CD8-positive, alpha-beta memory T cell (primary cell): ENCODE measurements at regions of chr18 and their contacts with region 1.

Region 1: GRCh38 chr18:3297025-3297984 is 35.4 kb downstream of the MYL12B start:
- DNase-seq: peak; percentile 83 to 95 (median 86)
- H3K4me3 ChIP-seq: peak overlapping the region; percentile 92
- H3K4me3 Mint-ChIP-seq: peak overlapping the region; percentile 92 to 98 (median 95)
- H3K27ac ChIP-seq: peak overlapping the region; percentile 80
- H3K27ac Mint-ChIP-seq: peak overlapping the region; percentile 31 to 93 (median 86)
- H3K4me1 ChIP-seq: peaks cover 12% of the 10 kb centered on the region
- H3K4me1 Mint-ChIP-seq: peaks cover 8 to 12% (median 11%) of the 10 kb centered on the region in 3 donors
- H3K27me3 ChIP-seq: peaks cover 5% of the 10 kb centered on the region
- H3K27me3 Mint-ChIP-seq: peaks cover 8 to 34% of the 10 kb centered on the region in 2 donors

Region 2: GRCh38 chr18:3254700-3255099 is 42.6 kb before region 1 on chr18:
- CTCF ChIA-PET with region 1: no interaction called
- POLR2A ChIA-PET with region 1: no interaction called
- DNase-seq: no peak
- H3K4me3 ChIP-seq: peak overlapping the region; percentile 17
- H3K4me3 Mint-ChIP-seq: peak overlapping the region in 2 of 7 donors; percentile 2 to 33
- H3K27ac ChIP-seq: no peak overlapping the region
- H3K27ac Mint-ChIP-seq: peak overlapping the region; percentile 49 to 100 (median 81)
- H3K4me1 ChIP-seq: peaks cover 93% of the 10 kb centered on the region
- H3K4me1 Mint-ChIP-seq: peaks cover 76 to 97% (median 95%) of the 10 kb centered on the region in 3 donors
- H3K27me3 ChIP-seq: no peaks in the 10 kb centered on the region
- H3K27me3 Mint-ChIP-seq: no peaks in the 10 kb centered on the region

Region 3: DNA sequence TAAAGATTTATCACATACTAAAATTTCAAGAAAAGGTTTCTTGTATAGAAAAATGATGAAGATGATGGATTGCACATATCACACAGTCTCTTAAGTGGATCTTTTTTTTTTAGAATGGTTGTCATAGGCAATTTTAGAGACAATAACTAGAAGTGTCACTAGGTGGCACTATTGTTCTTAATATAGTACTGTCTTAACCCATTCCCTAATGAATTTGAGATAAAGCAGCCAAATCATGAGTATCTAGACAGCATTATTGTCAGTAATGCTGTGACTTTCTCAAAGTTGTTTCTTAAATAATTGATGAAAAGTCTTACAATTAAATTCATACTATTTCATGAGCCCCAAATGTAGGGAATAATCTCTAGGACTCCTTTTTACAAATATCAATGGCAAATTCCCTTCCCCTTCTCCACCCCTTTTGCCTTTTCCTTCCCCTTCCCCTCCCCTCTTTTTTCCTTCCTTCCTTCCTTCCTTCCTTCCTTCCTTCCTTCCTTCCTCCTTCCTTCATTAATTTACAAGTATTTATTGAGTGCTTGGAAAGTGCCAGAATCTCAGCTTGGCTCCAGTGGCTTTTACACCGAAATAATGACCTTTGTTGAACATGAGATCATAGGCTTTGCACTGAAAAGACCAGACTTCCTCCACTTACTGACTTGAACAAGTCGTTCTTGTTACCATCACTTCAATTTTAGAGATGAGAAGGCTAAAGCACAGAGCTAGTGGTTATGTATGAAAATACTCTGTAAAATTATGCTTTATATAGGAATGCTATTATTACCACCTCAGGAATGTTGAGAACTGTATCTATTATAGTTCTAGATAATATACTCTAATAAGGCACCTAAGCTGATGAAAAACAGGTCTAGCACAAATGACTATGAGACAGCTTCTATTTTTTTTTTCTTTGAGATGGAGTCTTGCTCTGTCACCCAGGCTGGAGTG is 15.6 kb before region 1 on chr18:
- CTCF ChIA-PET with region 1: interaction called, 22 read pairs
- POLR2A ChIA-PET with region 1: no interaction called
- DNase-seq: peak in 2 of 5 donors; percentile 63 to 66
- H3K4me3 ChIP-seq: no peak overlapping the region
- H3K4me3 Mint-ChIP-seq: no peak overlapping the region
- H3K27ac ChIP-seq: no peak overlapping the region
- H3K27ac Mint-ChIP-seq: no peak overlapping the region
- H3K4me1 ChIP-seq: no peaks in the 10 kb centered on the region
- H3K4me1 Mint-ChIP-seq: peaks cover 0 to 5% (median 0%) of the 10 kb centered on the region in 3 donors
- H3K27me3 ChIP-seq: no peaks in the 10 kb centered on the region
- H3K27me3 Mint-ChIP-seq: no peaks in the 10 kb centered on the region

Region 4: GRCh38 chr18:3585656-3586509 is 288.6 kb after region 1 on chr18:
- CTCF ChIA-PET with region 1: interaction called, 10 read pairs
- POLR2A ChIA-PET with region 1: no interaction called
- DNase-seq: peak; percentile 40 to 78 (median 59)
- H3K4me3 ChIP-seq: no peak overlapping the region
- H3K4me3 Mint-ChIP-seq: peak overlapping the region in 3 of 7 donors; percentile 20 to 53 (median 21)
- H3K27ac ChIP-seq: peak overlapping the region; percentile 27
- H3K27ac Mint-ChIP-seq: peak overlapping the region in 6 of 8 donors; percentile 1 to 53 (median 43)
- H3K4me1 ChIP-seq: no peaks in the 10 kb centered on the region
- H3K4me1 Mint-ChIP-seq: peaks cover 9 to 14% (median 13%) of the 10 kb centered on the region in 3 donors
- H3K27me3 ChIP-seq: no peaks in the 10 kb centered on the region
- H3K27me3 Mint-ChIP-seq: peaks cover 0 to 1% of the 10 kb centered on the region in 2 donors

Region 5: GRCh38 chr18:3593904-3594661 is 296.8 kb after region 1 on chr18:
- CTCF ChIA-PET with region 1: interaction called, 12 read pairs
- POLR2A ChIA-PET with region 1: interaction called, 18 read pairs
- DNase-seq: peak; percentile 77 to 95 (median 93)
- H3K4me3 ChIP-seq: peak overlapping the region; percentile 74
- H3K4me3 Mint-ChIP-seq: peak overlapping the region; percentile 94 to 98 (median 95)
- H3K27ac ChIP-seq: peak overlapping the region; percentile 95
- H3K27ac Mint-ChIP-seq: peak overlapping the region; percentile 97 to 100 (median 99)
- H3K4me1 ChIP-seq: peaks cover 41% of the 10 kb centered on the region
- H3K4me1 Mint-ChIP-seq: peaks cover 49 to 64% (median 54%) of the 10 kb centered on the region in 3 donors
- H3K27me3 ChIP-seq: no peaks in the 10 kb centered on the region
- H3K27me3 Mint-ChIP-seq: no peaks in the 10 kb centered on the region

Region 6: GRCh38 chr18:3604498-3605408 is 307.4 kb after region 1 on chr18:
- CTCF ChIA-PET with region 1: interaction called, 12 read pairs
- POLR2A ChIA-PET with region 1: no interaction called
- DNase-seq: peak in 2 of 5 donors; percentile 38 to 48
- H3K4me3 ChIP-seq: peak overlapping the region; percentile 57
- H3K4me3 Mint-ChIP-seq: no peak overlapping the region
- H3K27ac ChIP-seq: peak overlapping the region; percentile 94
- H3K27ac Mint-ChIP-seq: no peak overlapping the region
- H3K4me1 ChIP-seq: peaks cover 44% of the 10 kb centered on the region
- H3K4me1 Mint-ChIP-seq: peaks cover 13 to 15% (median 15%) of the 10 kb centered on the region in 3 donors
- H3K27me3 ChIP-seq: no peaks in the 10 kb centered on the region
- H3K27me3 Mint-ChIP-seq: no peaks in the 10 kb centered on the region